Breast epithelium (tissue), 4 donors: ENCODE measurements at regions of chr1 and their contacts with region 1.

Region 1: GRCh38 chr1:159889821-159890252 is 10.1 kb downstream of the CFAP45 start:
- DNase-seq: no peak
- H3K4me3 ChIP-seq: no peak overlapping the region
- H3K27ac ChIP-seq: peak overlapping the region; percentile 27 to 85
- H3K4me1 ChIP-seq: no peaks in the 10 kb centered on the region
- H3K27me3 ChIP-seq: no peaks in the 10 kb centered on the region
- CTCF ChIP-seq: no peak
- POLR2A ChIP-seq: no peak

Region 2: GRCh38 chr1:159780583-159781582 is 109.0 kb before region 1 on chr1 and contains the start of gene DUSP23:
- intact Hi-C with region 1: loop called (anchors 10 kb)
- DNase-seq: peak; percentile 98 to 99
- H3K4me3 ChIP-seq: peak within 1 kb of the TSS; percentile 78 to 83 (median 79)
- H3K27ac ChIP-seq: peak within 1 kb of the TSS; percentile 85 to 86
- H3K4me1 ChIP-seq: peaks cover 0 to 7% of the 10 kb centered on the region in 2 donors
- H3K27me3 ChIP-seq: no peaks in the 10 kb centered on the region
- CTCF ChIP-seq: peak; percentile 96 to 99 (median 97)
- POLR2A ChIP-seq: peak; percentile 62
- total RNA-seq, gene DUSP23: 92.7 to 187 (median 147) TPM

Region 3: DNA sequence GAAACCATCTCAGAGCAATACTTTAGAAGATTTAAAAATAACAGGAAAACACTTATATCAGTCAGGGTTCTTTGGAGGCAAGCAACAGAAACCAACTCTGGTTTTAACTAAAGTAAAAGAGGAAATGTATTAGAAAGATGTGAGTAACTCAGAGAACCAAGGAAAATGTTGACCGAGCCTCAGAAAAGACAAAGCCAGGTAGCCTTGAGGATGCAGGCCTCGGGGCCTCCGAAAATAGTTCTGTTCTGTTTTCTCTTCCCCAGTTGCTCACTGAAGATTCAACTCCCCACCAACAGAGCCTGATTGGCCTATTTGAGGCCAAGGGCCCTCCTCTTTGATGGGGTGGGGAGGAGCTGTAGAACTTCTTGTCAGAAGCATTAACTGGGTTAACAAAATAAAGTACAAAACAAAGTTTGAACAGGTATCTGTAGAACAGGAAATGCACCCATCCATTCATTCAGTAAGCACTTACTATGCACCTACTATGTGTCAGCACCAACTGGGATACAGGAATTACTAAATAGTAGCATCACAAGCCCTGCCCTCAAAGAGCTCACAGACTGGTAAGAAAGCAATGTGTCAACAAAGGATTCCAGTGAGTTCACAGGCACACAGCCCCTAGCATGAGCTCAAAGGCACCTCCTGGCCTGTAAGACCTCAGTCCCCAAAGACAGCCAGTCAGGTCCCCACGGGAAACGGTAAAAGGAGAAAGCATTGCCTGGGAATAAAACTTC is 50.6 kb before region 1 on chr1:
- intact Hi-C with region 1: no loop called
- DNase-seq: no peak
- H3K4me3 ChIP-seq: no peak overlapping the region
- H3K27ac ChIP-seq: no peak overlapping the region
- H3K4me1 ChIP-seq: no peaks in the 10 kb centered on the region
- H3K27me3 ChIP-seq: no peaks in the 10 kb centered on the region
- CTCF ChIP-seq: no peak
- POLR2A ChIP-seq: no peak

Region 4: GRCh38 chr1:160400223-160400645 is 510.4 kb after region 1 on chr1 and contains the start of gene VANGL2:
- intact Hi-C with region 1: no loop called
- DNase-seq: peak; percentile 70 to 77
- H3K4me3 ChIP-seq: peak within 1 kb of the TSS; percentile 63 to 93 (median 85)
- H3K27ac ChIP-seq: peak within 1 kb of the TSS; percentile 69 to 76
- H3K4me1 ChIP-seq: no peaks in the 10 kb centered on the region
- H3K27me3 ChIP-seq: no peaks in the 10 kb centered on the region
- CTCF ChIP-seq: peak in 1 of 3 donors; percentile 35
- POLR2A ChIP-seq: no peak
- total RNA-seq, gene VANGL2: 0.48 to 7.6 (median 5.6) TPM